ENCODE measurements at regions of chr17 and their contacts with region 1.

Region 1: GRCh38 chr17:59315866-59316265 is 15.6 kb upstream of the YPEL2 start:
- DNase-seq: no peak
- H3K4me3 ChIP-seq: no peak overlapping the region
- H3K27ac ChIP-seq: no peak overlapping the region
- H3K4me1 ChIP-seq: peaks cover 0 to 6% (median 4%) of the 10 kb centered on the region in 4 donors
- H3K27me3 ChIP-seq: no peaks in the 10 kb centered on the region
- CTCF ChIP-seq: no peak
- EP300 ChIP-seq: no peak
- POLR2A ChIP-seq: no peak

Region 2: DNA sequence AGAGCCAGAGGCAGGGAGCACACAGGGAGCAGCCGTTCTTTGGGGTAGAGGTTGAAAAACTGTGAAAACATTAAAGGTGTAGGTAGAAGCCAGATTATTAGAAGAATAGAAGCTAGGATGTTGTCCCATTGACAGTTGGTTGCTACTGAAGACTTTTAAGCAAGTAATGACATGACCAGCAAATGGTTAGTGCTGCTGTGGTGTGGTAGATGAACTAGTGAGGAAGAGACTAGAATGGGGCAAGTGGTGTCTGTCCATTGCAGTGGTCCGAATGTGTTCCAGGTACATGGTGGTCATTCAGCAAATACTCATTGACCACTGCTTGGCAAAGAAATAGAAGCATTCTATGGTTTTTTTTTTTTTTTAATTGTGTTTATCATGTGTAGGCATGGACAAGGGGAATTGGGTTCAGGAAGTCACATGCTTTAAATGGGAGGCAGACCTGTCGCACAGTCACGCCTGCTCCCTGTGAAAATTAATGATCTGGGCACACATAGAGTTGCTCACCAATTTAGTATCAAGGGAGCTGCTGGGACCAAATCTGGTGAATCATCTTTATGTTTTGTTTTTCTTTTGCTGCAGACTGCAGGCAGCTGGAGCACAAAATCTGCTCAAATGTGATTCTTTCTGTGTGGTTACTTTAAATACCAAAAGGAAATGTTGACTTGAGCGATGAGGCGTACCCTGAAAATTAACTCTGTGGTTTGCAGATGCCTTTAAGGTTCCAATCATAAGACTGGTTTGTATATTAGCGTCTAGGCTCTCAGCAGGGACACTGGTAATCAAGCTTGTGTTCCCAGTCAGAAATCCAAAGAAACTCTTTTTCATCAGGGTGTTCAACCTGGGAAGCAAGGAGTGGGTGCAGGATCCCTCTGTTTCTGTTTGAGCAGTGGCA is 46.3 kb after region 1 on chr17:
- intact Hi-C with region 1: no loop called
- DNase-seq: peak in 1 of 2 donors; percentile 50
- H3K4me3 ChIP-seq: no peak overlapping the region
- H3K27ac ChIP-seq: peak overlapping the region; percentile 43 to 73 (median 55)
- H3K4me1 ChIP-seq: peaks cover 67 to 100% (median 84%) of the 10 kb centered on the region in 4 donors
- H3K27me3 ChIP-seq: no peaks in the 10 kb centered on the region
- CTCF ChIP-seq: no peak
- EP300 ChIP-seq: no peak
- POLR2A ChIP-seq: no peak

Region 3: DNA sequence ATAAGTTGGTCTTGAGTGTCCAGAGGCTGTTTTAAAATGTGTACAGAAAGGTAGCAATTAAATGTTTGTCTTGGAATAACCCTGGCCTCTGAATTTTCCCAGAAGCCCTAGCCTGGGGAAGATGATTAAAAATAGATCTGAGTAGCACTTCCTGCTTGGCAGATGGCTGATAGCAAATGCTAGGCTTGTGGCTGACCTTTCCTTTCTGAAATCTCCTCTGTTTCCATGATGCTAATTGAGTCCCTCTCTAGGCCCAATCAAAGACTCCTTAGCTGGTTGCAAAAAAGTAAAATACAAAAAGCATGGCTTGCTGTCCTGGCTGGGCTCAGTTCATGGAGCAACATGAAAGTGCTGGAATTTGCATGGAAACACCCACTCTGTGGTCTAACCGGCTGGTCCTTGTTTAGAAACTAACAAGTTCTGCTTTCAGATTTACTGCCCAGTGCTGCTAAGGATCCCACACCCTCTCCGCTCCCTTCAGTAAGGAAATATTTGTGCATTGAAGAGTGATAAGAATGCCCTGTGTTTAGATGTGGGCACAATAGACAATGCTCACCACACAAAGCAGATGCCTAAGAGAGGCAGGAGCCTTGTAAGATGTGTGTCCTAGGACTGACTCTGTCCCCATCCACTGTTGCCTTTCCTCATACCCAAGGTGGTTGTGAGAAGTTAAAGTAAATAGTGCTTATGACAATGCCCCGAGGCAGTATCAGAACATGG is 56.4 kb after region 1 on chr17:
- intact Hi-C with region 1: no loop called
- DNase-seq: peak; percentile 53 to 88
- H3K4me3 ChIP-seq: peak overlapping the region in 1 of 4 donors; percentile 10
- H3K27ac ChIP-seq: peak overlapping the region; percentile 81 to 95 (median 86)
- H3K4me1 ChIP-seq: peaks cover 83 to 99% (median 92%) of the 10 kb centered on the region in 4 donors
- H3K27me3 ChIP-seq: no peaks in the 10 kb centered on the region
- CTCF ChIP-seq: no peak
- EP300 ChIP-seq: no peak
- POLR2A ChIP-seq: no peak

Region 4: DNA sequence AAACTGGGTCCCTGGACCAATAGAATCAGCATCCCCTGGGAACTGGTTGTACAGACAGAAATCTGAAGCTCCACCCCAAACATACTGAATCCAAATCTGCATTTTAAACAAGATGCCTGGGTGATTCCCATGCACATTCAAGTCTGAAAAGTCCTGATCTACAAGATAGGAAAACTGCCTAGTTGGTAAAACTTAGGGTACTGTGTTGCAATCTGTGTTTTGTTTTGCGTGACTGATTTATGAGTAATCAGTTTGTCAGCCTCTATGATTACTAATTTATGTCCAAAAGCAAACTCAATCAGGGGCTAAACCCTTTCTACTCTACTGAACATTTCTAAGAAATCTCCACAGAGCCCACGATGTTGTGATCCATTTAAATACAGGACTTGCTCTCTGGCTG is 119.4 kb after region 1 on chr17:
- intact Hi-C with region 1: loop called (anchors 5 kb)
- DNase-seq: no peak
- H3K4me3 ChIP-seq: no peak overlapping the region
- H3K27ac ChIP-seq: peak overlapping the region in 1 of 5 donors; percentile 1
- H3K4me1 ChIP-seq: peaks cover 3 to 30% (median 13%) of the 10 kb centered on the region in 4 donors
- H3K27me3 ChIP-seq: no peaks in the 10 kb centered on the region
- CTCF ChIP-seq: no peak
- EP300 ChIP-seq: no peak
- POLR2A ChIP-seq: no peak

Measured in stomach (tissue), 19 donors.